Right ventricle myocardium superior (tissue), 1 donor: ENCODE measurements at regions of chr6 and their contacts with region 1.

Region 1: GRCh38 chr6:144343701-144344428 is 58.7 kb downstream of the UTRN start:
- DNase-seq: no peak
- ATAC-seq: peak; percentile 47

Region 2: DNA sequence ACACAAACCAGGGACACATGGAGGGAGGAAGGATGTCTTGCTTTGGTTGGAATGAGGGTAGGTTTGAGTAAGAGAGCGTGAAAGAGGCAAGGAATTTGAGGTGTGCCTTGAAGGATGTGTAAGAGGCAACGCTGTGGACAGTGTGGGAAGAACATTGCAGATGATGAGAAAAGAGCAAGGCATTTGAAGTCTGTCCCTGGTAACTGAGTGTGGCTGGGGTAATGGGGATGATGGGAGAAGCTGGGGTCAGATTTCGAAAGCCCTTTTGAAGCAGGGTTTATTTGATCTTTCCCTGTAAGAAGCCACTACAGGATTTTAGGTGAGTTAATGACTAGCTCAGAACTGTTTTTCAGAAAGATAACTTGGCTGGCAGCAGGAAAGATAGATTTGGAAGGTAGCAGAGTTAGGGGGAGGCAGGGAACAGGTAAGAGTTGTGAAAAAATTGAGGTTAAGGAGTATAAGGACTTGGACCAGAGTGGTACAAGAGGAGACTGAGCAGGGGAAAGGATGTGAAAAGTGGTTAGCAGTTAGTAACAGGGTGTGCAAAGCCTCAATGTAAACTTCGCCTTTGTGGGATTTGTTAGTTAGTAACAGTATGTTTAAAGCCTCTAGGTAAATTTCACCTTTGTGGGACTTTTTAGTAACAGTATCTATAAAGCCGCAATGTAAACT is 41.0 kb before region 1 on chr6:
- intact Hi-C with region 1: loop called (anchors 5 kb)
- DNase-seq: no peak
- ATAC-seq: no peak

Region 3: GRCh38 chr6:144696610-144697368 is 352.9 kb after region 1 on chr6:
- intact Hi-C with region 1: no loop called
- DNase-seq: no peak
- ATAC-seq: no peak